ENCODE measurements at regions of chr6 and their contacts with region 1.

Region 1: DNA sequence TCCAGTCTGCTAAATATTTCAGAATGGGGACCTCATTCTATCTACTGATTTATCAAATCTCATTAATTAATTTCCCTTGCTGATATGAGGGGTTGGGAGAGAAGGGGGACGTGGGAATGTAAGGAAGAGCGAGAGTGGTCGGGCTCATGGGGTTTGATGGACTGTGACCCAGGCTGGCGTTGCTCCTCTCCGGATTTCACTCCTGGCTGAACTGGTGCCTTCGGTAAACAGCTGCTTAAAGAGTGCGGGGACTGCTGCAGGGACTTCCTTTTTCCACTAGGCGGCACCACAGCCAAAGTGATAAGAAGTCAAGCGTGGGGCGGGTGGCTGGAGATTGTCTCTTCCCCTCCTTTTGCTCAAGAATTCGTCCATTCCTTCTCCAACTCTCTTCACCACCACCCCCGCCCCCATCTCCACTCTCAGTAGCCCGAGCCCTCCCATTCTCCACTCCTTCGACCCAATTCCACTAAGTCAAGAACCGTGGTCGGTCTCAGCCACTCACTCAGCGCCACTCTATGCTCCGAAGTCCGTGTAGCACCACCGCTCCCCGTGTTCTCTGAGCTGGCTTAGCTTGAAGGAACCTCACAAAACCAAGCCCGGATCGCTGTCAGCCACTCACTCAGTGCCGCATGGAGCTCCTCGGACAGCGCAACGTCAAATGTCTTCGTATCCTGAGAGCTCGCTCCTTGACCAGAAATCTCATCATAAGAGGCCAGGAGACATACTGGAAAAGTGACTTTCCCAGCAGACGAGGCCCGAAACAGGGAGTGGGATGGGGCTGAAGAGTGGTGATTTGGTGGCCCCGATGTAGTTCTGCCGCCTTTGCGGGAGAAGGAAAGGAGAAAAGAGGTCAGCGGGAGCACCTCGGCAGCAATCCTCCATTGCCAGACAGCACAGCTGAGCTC is 9.7 kb downstream of the TRIM31 start:
- DNase-seq: peak; percentile 72 to 88 (median 76)
- H3K4me3 ChIP-seq: peak overlapping the region; percentile 58
- H3K4me3 Mint-ChIP-seq: peak overlapping the region; percentile 81 to 93 (median 88)
- H3K27ac ChIP-seq: no peak overlapping the region
- H3K27ac Mint-ChIP-seq: peak overlapping the region; percentile 5 to 86 (median 67)
- H3K4me1 ChIP-seq: peaks cover 37% of the 10 kb centered on the region
- H3K4me1 Mint-ChIP-seq: peaks cover 36 to 43% (median 42%) of the 10 kb centered on the region in 3 donors
- H3K27me3 ChIP-seq: peaks cover 26% of the 10 kb centered on the region
- H3K27me3 Mint-ChIP-seq: peaks cover 38 to 62% of the 10 kb centered on the region in 2 donors

Region 2: DNA sequence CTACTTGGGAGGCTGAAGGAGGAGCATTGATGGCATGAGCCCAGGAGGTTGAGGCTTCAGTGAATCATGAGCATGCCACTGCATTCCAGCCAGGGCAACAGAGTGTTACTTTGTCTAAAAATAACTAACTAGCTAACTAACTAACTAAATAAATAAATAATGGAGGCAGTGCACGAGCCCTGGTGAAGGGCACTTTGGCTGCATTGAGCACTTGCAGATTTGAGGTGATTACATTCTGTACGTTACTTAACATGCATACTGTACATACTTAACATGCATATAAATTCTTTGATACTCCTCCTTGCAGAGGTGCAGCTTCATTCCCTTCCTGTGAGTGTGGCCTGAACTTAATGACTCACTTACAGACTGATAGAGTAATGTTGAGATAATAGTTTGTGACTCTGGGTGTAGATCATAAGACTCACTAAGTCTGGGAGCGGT is 150.2 kb before region 1 on chr6:
- CTCF ChIA-PET with region 1: no interaction called
- POLR2A ChIA-PET with region 1: no interaction called
- DNase-seq: no peak
- H3K4me3 ChIP-seq: no peak overlapping the region
- H3K4me3 Mint-ChIP-seq: no peak overlapping the region
- H3K27ac ChIP-seq: no peak overlapping the region
- H3K27ac Mint-ChIP-seq: peak overlapping the region in 1 of 8 donors; percentile 55
- H3K4me1 ChIP-seq: no peaks in the 10 kb centered on the region
- H3K4me1 Mint-ChIP-seq: peaks cover 24 to 37% (median 25%) of the 10 kb centered on the region in 3 donors
- H3K27me3 ChIP-seq: no peaks in the 10 kb centered on the region
- H3K27me3 Mint-ChIP-seq: no peaks in the 10 kb centered on the region

Region 3: GRCh38 chr6:30002871-30003270 is 100.4 kb before region 1 on chr6:
- CTCF ChIA-PET with region 1: no interaction called
- POLR2A ChIA-PET with region 1: no interaction called
- DNase-seq: no peak
- H3K4me3 ChIP-seq: no peak overlapping the region
- H3K4me3 Mint-ChIP-seq: no peak overlapping the region
- H3K27ac ChIP-seq: no peak overlapping the region
- H3K27ac Mint-ChIP-seq: no peak overlapping the region
- H3K4me1 ChIP-seq: peaks cover 15% of the 10 kb centered on the region
- H3K4me1 Mint-ChIP-seq: peaks cover 26 to 37% (median 32%) of the 10 kb centered on the region in 3 donors
- H3K27me3 ChIP-seq: peaks cover 8% of the 10 kb centered on the region
- H3K27me3 Mint-ChIP-seq: peaks cover 30 to 31% of the 10 kb centered on the region in 2 donors

Region 4: DNA sequence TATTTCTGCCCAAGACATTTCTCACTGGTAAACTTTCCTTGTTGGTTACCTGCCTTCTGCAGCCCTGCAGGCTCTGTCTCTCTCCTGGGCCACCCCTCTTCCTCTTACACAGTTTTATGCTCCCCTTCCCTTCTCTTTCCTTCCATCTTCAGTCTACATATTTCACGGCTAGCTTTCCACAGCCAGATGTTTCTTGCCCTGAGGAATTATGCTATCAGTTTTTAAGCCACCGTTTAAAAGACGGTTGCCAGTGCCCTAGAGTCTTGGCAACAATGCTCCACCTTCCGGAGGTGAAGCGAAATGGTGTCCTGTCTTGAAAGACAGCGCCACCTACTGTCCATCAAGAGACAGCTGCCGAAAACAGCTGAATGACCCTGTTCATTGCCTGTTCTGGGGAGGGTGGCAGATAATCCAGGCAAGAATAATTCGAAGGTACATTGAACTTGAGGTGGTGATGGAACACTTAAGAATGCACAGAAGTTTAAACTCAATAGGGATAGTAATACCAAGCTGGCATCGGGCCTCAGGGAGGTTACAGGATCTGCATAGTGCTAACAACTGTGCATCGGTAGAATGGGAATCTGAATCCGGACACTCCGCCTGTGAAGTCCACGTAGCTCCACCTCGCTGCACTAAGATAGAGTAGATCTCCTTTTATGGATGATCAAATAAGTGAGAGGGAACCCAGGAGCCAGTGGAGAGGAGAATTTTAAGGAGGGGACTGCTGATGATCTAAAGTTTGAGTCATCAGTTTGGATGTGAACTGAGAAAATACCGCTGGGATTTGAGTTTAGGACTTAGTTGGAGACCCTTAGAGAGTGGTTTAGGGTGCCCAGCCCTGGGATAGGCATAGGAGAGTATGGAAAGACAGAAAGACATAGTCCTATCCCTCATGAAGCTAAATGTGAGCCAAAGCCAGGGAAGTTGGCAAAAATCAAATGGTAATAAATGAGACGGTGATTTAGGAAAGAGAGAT is 28.0 kb after region 1 on chr6:
- CTCF ChIA-PET with region 1: interaction called, 182 read pairs
- POLR2A ChIA-PET with region 1: interaction called, 6 read pairs
- DNase-seq: peak; percentile 50 to 82 (median 74)
- H3K4me3 ChIP-seq: no peak overlapping the region
- H3K4me3 Mint-ChIP-seq: peak overlapping the region in 1 of 7 donors; percentile 21
- H3K27ac ChIP-seq: no peak overlapping the region
- H3K27ac Mint-ChIP-seq: peak overlapping the region in 1 of 8 donors; percentile 48
- H3K4me1 ChIP-seq: peaks cover 7% of the 10 kb centered on the region
- H3K4me1 Mint-ChIP-seq: peaks cover 3 to 15% (median 4%) of the 10 kb centered on the region in 3 donors
- H3K27me3 ChIP-seq: peaks cover 16% of the 10 kb centered on the region
- H3K27me3 Mint-ChIP-seq: peaks cover 34 to 79% of the 10 kb centered on the region in 2 donors

Region 5: GRCh38 chr6:30272017-30272416 is 168.8 kb after region 1 on chr6:
- CTCF ChIA-PET with region 1: no interaction called
- POLR2A ChIA-PET with region 1: interaction called, 11 read pairs
- DNase-seq: no peak
- H3K4me3 ChIP-seq: no peak overlapping the region
- H3K4me3 Mint-ChIP-seq: no peak overlapping the region
- H3K27ac ChIP-seq: no peak overlapping the region
- H3K27ac Mint-ChIP-seq: no peak overlapping the region
- H3K4me1 ChIP-seq: no peaks in the 10 kb centered on the region
- H3K4me1 Mint-ChIP-seq: no peaks in the 10 kb centered on the region
- H3K27me3 ChIP-seq: no peaks in the 10 kb centered on the region
- H3K27me3 Mint-ChIP-seq: peaks cover 4 to 12% of the 10 kb centered on the region in 2 donors

Region 6: DNA sequence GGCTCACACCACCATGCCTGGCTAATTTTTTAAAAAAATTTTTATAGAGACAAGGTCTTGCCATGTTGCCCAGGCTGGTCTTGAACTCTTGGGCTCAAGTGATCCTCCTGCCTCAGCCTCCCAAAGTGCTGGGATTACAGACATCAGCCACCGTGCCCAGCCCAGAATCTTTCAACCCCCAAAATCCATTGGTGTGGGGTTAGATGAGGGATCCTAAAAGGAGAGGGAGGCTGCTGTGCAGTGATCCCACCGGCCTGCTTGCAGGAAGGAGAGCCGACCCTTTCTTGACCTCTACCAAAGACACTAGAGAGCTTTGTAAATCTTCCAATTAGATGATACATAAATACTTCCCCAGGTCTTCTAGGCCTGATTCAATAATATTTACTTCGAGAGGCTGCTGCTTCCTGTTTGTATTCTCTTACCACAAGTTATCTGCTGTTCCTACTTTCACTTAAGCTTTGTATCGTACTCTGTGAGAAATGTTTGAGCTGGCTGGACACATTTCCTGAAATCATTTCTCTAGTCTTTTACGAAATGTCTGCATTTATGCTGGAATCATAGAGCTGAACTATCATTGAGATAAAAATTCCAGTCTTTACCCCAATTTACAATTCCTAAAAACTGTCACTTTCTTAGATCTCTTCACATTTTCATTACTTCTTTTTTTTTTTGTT is 690.4 kb after region 1 on chr6:
- CTCF ChIA-PET with region 1: no interaction called
- POLR2A ChIA-PET with region 1: no interaction called
- DNase-seq: peak in 2 of 5 donors; percentile 30 to 58
- H3K4me3 ChIP-seq: peak overlapping the region; percentile 27
- H3K4me3 Mint-ChIP-seq: peak overlapping the region in 6 of 7 donors; percentile 53 to 84 (median 77)
- H3K27ac ChIP-seq: peak overlapping the region; percentile 58
- H3K27ac Mint-ChIP-seq: peak overlapping the region; percentile 84 to 99 (median 94)
- H3K4me1 ChIP-seq: peaks cover 46% of the 10 kb centered on the region
- H3K4me1 Mint-ChIP-seq: peaks cover 14 to 64% (median 46%) of the 10 kb centered on the region in 3 donors
- H3K27me3 ChIP-seq: no peaks in the 10 kb centered on the region
- H3K27me3 Mint-ChIP-seq: no peaks in the 10 kb centered on the region

Measured in CD8-positive, alpha-beta memory T cell (primary cell).